Activated T-helper 2 cell treated with anti-CD3 and anti-CD28 coated beads, Interferon-gamma antibody, Interleukin-2, Interleukin-4, amounts not matched to agents 10 μg/mL and 5 μg/mL and 100 μg/mL, durations not matched to agents 14 hours and 24 hours and 36 hours (primary cell): ENCODE measurements at regions of chr2 and their contacts with region 1.

Region 1: DNA sequence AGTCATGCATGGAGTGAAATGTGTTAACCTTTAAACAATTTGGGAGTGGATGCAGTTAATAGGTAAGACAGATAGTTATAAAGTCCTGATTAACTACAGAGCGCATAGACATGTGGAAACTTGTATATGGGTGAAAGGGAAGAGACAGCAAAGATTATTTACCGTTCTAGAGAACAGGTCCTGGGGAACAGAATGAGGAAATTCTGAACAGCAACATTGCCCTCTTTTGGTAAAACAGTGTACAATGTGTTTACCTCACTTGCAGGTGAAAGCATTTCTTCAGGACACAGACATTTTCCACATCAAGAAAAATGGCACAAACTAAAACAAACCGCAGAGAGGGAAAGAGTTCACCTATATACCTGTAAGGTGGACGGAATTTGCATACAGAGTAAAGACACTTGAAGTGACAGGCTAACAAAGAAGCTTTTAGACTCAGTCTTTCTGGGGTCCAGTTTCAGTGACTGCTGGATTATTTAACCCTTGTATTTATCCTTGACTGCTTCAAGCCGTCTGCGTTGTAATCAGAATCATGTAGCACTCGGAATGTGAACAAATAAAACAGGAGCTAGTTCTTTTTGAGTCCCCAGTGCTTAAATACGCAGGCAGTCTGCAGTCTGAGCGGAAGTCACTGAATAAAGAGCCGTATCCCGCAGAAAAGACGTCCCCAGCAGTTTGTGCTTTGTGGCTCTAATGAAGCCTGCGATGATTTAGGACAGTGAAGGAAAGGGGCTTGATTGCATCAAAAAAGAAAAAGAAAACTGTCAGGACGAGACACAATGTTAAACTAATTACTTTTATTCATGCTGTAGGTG is 364.8 kb upstream of the GALNT5 start:
- DNase-seq: no peak
- H3K4me3 Mint-ChIP-seq: peak overlapping the region; percentile 27
- H3K27ac Mint-ChIP-seq: no peak overlapping the region
- H3K4me1 Mint-ChIP-seq: peaks cover 42% of the 10 kb centered on the region
- H3K27me3 Mint-ChIP-seq: peaks cover 55% of the 10 kb centered on the region

Region 2: DNA sequence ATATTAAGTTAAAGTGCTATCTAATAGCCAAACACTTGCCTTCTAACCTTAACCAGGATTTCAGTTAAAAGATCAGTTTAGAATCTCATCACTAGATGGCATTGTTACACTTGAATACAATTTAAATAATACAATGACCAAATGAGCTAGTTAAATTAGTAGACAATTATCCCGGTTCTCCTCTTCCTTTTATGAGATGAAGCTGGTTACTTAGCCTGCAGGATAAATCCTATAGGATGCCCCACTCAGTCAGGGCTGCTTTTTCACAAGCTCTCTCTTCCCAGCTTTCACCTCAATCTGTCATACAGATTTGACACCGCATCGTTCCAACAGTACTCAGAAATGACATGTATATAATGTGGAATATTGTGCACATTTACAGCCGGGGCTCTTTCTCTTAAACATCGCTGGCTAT is 1515.4 kb before region 1 on chr2:
- intact Hi-C with region 1: loop called (anchors 2 kb)
- DNase-seq: no peak
- H3K4me3 Mint-ChIP-seq: no peak overlapping the region
- H3K27ac Mint-ChIP-seq: peak overlapping the region; percentile 73
- H3K4me1 Mint-ChIP-seq: peaks cover 17% of the 10 kb centered on the region
- H3K27me3 Mint-ChIP-seq: peaks cover 9% of the 10 kb centered on the region

Region 3: GRCh38 chr2:156065905-156066304 is 826.8 kb before region 1 on chr2:
- intact Hi-C with region 1: loop called (anchors 10 kb)
- DNase-seq: no peak
- H3K4me3 Mint-ChIP-seq: no peak overlapping the region
- H3K27ac Mint-ChIP-seq: no peak overlapping the region
- H3K4me1 Mint-ChIP-seq: no peaks in the 10 kb centered on the region
- H3K27me3 Mint-ChIP-seq: no peaks in the 10 kb centered on the region

Region 4: GRCh38 chr2:156319811-156320485 is 572.7 kb before region 1 on chr2:
- intact Hi-C with region 1: loop called (anchors 5 kb)
- DNase-seq: no peak
- H3K4me3 Mint-ChIP-seq: peak overlapping the region; percentile 49
- H3K27ac Mint-ChIP-seq: no peak overlapping the region
- H3K4me1 Mint-ChIP-seq: peaks cover 31% of the 10 kb centered on the region
- H3K27me3 Mint-ChIP-seq: peaks cover 82% of the 10 kb centered on the region

Region 5: GRCh38 chr2:156908825-156909224 is 16.2 kb after region 1 on chr2:
- intact Hi-C with region 1: loop called (anchors 1 kb)
- DNase-seq: no peak
- H3K4me3 Mint-ChIP-seq: no peak overlapping the region
- H3K27ac Mint-ChIP-seq: no peak overlapping the region
- H3K4me1 Mint-ChIP-seq: peaks cover 18% of the 10 kb centered on the region
- H3K27me3 Mint-ChIP-seq: peaks cover 34% of the 10 kb centered on the region

Region 6: DNA sequence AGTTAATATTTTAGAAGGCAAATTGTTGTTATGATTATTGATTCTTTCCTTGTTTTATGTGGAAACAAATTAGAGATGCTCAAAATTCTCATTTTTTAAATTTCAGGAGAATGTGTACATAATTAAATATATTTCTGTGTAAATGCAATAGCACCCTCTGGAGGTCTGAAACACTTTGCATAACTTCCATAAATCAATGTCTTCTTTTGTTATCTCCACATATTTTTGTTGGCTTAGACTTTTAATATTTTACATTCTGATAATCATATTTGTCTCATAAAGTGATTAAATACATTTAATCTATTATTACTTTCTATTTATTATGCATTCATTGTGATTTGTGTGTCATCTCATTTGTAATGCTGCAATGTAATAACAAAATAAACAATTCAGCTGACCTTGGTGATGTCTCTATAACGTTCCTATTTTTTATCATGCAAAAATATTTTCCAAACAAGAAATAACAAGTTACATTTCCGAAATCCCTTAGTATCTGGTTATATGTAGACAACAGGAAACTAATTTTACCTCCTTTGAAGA is 163.1 kb after region 1 on chr2:
- intact Hi-C with region 1: loop called (anchors 10 kb)
- DNase-seq: no peak
- H3K4me3 Mint-ChIP-seq: no peak overlapping the region
- H3K27ac Mint-ChIP-seq: no peak overlapping the region
- H3K4me1 Mint-ChIP-seq: peaks cover 2% of the 10 kb centered on the region
- H3K27me3 Mint-ChIP-seq: peaks cover 8% of the 10 kb centered on the region

Region 7: GRCh38 chr2:157194097-157194688 is 301.5 kb after region 1 on chr2:
- intact Hi-C with region 1: loop called (anchors 5 kb)
- DNase-seq: no peak
- H3K4me3 Mint-ChIP-seq: no peak overlapping the region
- H3K27ac Mint-ChIP-seq: no peak overlapping the region
- H3K4me1 Mint-ChIP-seq: peaks cover 20% of the 10 kb centered on the region
- H3K27me3 Mint-ChIP-seq: peaks cover 14% of the 10 kb centered on the region